AG04449 (cell line): ENCODE measurements at regions of chr18 and their contacts with region 1.

Region 1: GRCh38 chr18:44325903-44326635 is 354.6 kb upstream of the SETBP1 start:
- DNase-seq: peak; percentile 10
- H3K4me3 ChIP-seq: no peak overlapping the region
- CTCF ChIP-seq: peak; percentile 58

Region 2: DNA sequence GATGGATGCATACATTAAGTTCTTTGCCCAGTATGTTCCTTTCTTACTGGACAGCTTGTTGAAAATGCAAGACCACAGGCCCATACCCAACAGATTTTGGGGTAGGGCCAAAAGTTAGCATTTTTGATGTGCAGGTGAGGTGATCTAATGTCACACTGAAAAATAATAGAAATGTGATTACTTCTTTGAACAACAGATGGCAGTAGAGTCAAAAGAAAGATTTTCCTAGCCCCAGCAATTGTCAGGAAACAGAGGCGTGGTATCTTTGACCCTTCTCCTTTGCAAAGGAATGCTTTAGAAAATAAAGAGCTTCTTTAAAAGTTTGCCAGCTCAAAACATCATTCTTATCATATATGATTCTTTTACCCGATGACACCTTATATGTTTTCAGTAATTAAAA is 705.1 kb before region 1 on chr18:
- CTCF ChIA-PET with region 1: interaction called, 11 read pairs
- POLR2A ChIA-PET with region 1: no interaction called
- DNase-seq: no peak
- H3K4me3 ChIP-seq: no peak overlapping the region
- CTCF ChIP-seq: peak; percentile 16

Region 3: GRCh38 chr18:44341759-44342158 is 15.7 kb after region 1 on chr18:
- CTCF ChIA-PET with region 1: no interaction called
- POLR2A ChIA-PET with region 1: no interaction called
- DNase-seq: no peak
- H3K4me3 ChIP-seq: no peak overlapping the region
- CTCF ChIP-seq: no peak